ENCODE measurements at regions of chr3 and their contacts with region 1.

Region 1: GRCh38 chr3:47802734-47803477 is at the start of gene DHX30:
- DNase-seq: peak; percentile 96
- H3K4me3 Mint-ChIP-seq: peak within 1 kb of the TSS; percentile 99
- H3K27ac Mint-ChIP-seq: peak within 1 kb of the TSS; percentile 96
- H3K4me1 Mint-ChIP-seq: peaks cover 19% of the 10 kb centered on the region
- H3K27me3 Mint-ChIP-seq: no peaks in the 10 kb centered on the region
- total RNA-seq, gene DHX30: 143 and 149 TPM in 2 replicates

Region 2: DNA sequence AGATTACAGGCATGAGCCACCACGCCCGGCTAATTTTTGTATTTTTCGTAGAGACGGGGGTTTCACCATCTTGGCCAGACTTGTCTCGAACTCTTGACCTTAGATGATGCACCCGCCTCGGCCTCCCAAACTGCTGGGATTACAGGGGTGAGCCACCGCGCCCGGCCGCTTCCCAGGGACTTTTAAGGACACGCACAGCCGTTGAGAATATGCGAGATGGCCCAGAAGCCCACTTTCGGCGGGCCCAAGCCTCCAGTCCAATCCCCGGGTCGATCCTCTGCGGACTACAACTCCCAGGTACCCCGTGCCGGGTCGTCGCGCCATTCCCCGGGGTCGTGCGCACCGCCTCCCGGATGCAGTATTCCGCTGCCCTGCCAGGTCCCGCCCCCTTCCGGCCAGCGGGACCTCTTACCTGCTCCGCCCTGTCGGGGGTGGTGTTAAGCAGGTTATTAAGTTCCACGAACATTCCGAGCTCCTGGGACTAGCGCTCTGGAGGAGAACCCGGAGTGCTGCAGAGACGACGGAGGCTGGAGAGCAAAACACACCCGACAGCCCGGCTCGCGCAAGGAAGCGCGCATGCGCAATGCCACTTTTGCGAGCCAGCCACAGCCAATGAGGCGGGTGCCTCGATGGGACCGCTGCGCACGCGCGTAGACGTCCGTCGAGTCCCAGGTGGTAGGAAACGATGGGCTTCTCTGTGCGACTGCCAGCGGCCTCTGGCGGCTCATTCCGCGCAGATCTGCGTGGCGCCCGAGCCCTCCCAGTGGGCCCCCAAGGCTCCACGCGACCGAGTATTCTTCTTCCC is 289.6 kb before region 1 on chr3 and contains the start of gene ELP6:
- intact Hi-C with region 1: loop called (anchors 1 kb)
- DNase-seq: peak; percentile 99
- H3K4me3 Mint-ChIP-seq: peak within 1 kb of the TSS; percentile 98
- H3K27ac Mint-ChIP-seq: peak within 1 kb of the TSS; percentile 98
- H3K4me1 Mint-ChIP-seq: peaks cover 17% of the 10 kb centered on the region
- H3K27me3 Mint-ChIP-seq: peaks cover 13% of the 10 kb centered on the region
- total RNA-seq, gene ELP6: 45.9 and 49.7 TPM in 2 replicates

Region 3: GRCh38 chr3:47824541-47825473 is 21.9 kb after region 1 on chr3:
- intact Hi-C with region 1: loop called (anchors 1 kb)
- DNase-seq: peak; percentile 95
- H3K4me3 Mint-ChIP-seq: peak overlapping the region; percentile 93
- H3K27ac Mint-ChIP-seq: peak overlapping the region; percentile 83
- H3K4me1 Mint-ChIP-seq: peaks cover 31% of the 10 kb centered on the region
- H3K27me3 Mint-ChIP-seq: no peaks in the 10 kb centered on the region

Region 4: GRCh38 chr3:48548729-48549705 is 746.1 kb after region 1 on chr3:
- intact Hi-C with region 1: no loop called
- DNase-seq: peak; percentile 95
- H3K4me3 Mint-ChIP-seq: no peak overlapping the region
- H3K27ac Mint-ChIP-seq: peak overlapping the region; percentile 37
- H3K4me1 Mint-ChIP-seq: peaks cover 24% of the 10 kb centered on the region
- H3K27me3 Mint-ChIP-seq: no peaks in the 10 kb centered on the region